ENCODE measurements at regions of chr1 and their contacts with region 1.

Region 1: GRCh38 chr1:8712413-8713231 is 104.8 kb downstream of the RERE start:
- DNase-seq: peak; percentile 5 to 87
- H3K4me3 ChIP-seq: peak overlapping the region; percentile 30; the same call in 1 of the 2 replicates
- H3K27ac ChIP-seq: peak overlapping the region; percentile 77
- H3K4me1 ChIP-seq: peaks cover 33% of the 10 kb centered on the region
- H3K27me3 ChIP-seq: no peaks in the 10 kb centered on the region
- CTCF ChIP-seq: no peak

Region 2: DNA sequence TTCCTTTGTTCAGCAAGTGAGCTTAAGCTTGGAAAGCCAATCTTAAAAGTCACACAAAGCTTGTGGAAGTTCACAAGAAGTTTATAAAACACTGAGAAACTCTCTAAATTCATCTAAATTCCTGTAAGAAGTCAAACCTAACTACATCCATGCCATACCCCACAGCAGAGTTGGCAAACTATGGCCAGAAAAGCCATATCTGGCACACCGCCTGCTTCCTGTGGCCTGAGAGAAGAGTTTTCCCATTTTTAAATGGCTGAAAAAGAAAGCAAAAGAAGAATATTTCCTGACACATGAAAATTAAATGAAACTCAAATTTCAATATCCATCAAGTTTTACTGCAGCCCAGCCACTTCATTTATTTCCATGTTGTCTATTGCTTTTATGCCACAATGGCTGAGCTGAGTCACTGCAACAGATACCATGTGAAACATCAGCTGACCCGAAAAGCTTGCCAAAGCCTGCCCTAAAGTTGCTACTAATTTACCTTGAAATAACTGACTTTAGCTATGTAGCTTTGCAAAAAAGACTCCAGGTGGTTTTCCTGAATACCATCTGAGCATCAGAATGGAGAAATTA is 157.6 kb before region 1 on chr1:
- CTCF ChIA-PET with region 1: interaction called, 14 read pairs
- POLR2A ChIA-PET with region 1: no interaction called
- intact Hi-C with region 1: no loop called
- DNase-seq: no peak
- H3K4me3 ChIP-seq: no peak overlapping the region
- H3K27ac ChIP-seq: no peak overlapping the region
- H3K4me1 ChIP-seq: no peaks in the 10 kb centered on the region
- H3K27me3 ChIP-seq: no peaks in the 10 kb centered on the region
- CTCF ChIP-seq: no peak

Region 3: GRCh38 chr1:9066945-9067807 is 354.6 kb after region 1 on chr1:
- CTCF ChIA-PET with region 1: no interaction called
- POLR2A ChIA-PET with region 1: no interaction called
- intact Hi-C with region 1: no loop called
- DNase-seq: peak; percentile 17 to 53
- H3K4me3 ChIP-seq: no peak overlapping the region
- H3K27ac ChIP-seq: no peak overlapping the region
- H3K4me1 ChIP-seq: no peaks in the 10 kb centered on the region
- H3K27me3 ChIP-seq: no peaks in the 10 kb centered on the region
- CTCF ChIP-seq: no peak